Activated naive CD4-positive, alpha-beta T cell treated with anti-CD3 and anti-CD28 coated beads for 36 hours (primary cell): ENCODE measurements at regions of chr15 and their contacts with region 1.

Region 1: DNA sequence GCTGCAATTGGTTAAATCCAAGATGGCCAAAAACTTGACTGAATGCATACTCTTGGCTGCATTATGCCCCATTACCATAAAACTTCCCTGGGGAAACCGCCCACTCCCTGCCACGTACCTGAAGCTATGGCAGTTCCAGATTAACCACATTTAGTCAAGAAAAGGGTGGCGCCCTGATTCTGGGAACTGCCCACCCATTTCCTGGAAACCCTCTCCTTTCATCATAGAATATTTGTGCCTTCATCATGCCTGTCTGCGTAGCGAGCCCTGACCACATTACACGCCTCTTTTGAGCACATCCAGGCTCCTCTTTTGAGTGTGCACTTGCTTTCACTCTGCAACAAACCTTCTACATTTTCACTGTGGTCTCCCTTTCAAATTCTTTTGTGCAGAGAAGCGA is 5.2 kb downstream of the LINS1 start:
- DNase-seq: peak; percentile 99
- H3K4me3 Mint-ChIP-seq: peak overlapping the region; percentile 70
- H3K27ac Mint-ChIP-seq: no peak overlapping the region
- H3K4me1 Mint-ChIP-seq: peaks cover 65% of the 10 kb centered on the region
- H3K27me3 Mint-ChIP-seq: no peaks in the 10 kb centered on the region

Region 2: GRCh38 chr15:99442252-99442897 is 1154.4 kb before region 1 on chr15:
- CTCF ChIA-PET with region 1: no interaction called
- intact Hi-C with region 1: loop called (anchors 10 kb)
- DNase-seq: no peak
- H3K4me3 Mint-ChIP-seq: no peak overlapping the region
- H3K27ac Mint-ChIP-seq: no peak overlapping the region
- H3K4me1 Mint-ChIP-seq: peaks cover 57% of the 10 kb centered on the region
- H3K27me3 Mint-ChIP-seq: no peaks in the 10 kb centered on the region

Region 3: GRCh38 chr15:100529556-100529955 is 67.2 kb before region 1 on chr15:
- CTCF ChIA-PET with region 1: no interaction called
- intact Hi-C with region 1: no loop called
- DNase-seq: no peak
- H3K4me3 Mint-ChIP-seq: no peak overlapping the region
- H3K27ac Mint-ChIP-seq: no peak overlapping the region
- H3K4me1 Mint-ChIP-seq: peaks cover 16% of the 10 kb centered on the region
- H3K27me3 Mint-ChIP-seq: no peaks in the 10 kb centered on the region

Region 4: DNA sequence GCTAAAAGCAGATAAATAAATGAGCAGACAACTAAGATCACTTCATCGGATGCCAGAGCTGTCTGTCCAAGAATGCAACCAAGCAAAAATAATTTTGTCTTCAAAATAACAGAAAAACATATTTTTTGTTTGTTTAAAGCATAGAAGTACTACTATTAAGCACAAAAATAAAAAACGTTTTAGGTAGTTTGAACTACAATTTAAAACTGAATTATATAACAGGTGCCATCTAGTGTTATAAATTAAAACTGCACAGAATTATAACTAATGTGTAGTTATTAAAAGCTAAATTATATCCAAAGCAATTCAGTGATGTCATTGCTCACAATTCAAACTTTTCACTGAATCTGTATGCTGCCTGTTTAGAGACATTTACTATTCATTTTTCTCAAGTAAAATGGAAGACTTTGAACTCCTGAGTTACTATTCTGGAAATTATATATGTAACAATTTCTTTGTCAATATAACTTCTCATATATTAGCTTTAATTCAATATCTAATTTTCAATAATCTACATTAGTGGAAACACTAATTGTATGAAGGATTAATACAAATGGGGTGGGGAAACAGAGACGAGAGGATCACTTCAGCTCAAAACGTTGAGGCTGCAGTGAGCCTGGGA is 24.3 kb before region 1 on chr15:
- CTCF ChIA-PET with region 1: interaction called, 6 read pairs
- intact Hi-C with region 1: loop called (anchors 1 kb)
- DNase-seq: no peak
- H3K4me3 Mint-ChIP-seq: no peak overlapping the region
- H3K27ac Mint-ChIP-seq: peak overlapping the region; percentile 84
- H3K4me1 Mint-ChIP-seq: peaks cover 57% of the 10 kb centered on the region
- H3K27me3 Mint-ChIP-seq: no peaks in the 10 kb centered on the region

Region 5: GRCh38 chr15:100703032-100703578 is 106.3 kb after region 1 on chr15:
- CTCF ChIA-PET with region 1: no interaction called
- intact Hi-C with region 1: loop called (anchors 1 kb)
- DNase-seq: peak; percentile 71
- H3K4me3 Mint-ChIP-seq: no peak overlapping the region
- H3K27ac Mint-ChIP-seq: peak overlapping the region; percentile 71
- H3K4me1 Mint-ChIP-seq: peaks cover 5% of the 10 kb centered on the region
- H3K27me3 Mint-ChIP-seq: peaks cover 17% of the 10 kb centered on the region

Region 6: DNA sequence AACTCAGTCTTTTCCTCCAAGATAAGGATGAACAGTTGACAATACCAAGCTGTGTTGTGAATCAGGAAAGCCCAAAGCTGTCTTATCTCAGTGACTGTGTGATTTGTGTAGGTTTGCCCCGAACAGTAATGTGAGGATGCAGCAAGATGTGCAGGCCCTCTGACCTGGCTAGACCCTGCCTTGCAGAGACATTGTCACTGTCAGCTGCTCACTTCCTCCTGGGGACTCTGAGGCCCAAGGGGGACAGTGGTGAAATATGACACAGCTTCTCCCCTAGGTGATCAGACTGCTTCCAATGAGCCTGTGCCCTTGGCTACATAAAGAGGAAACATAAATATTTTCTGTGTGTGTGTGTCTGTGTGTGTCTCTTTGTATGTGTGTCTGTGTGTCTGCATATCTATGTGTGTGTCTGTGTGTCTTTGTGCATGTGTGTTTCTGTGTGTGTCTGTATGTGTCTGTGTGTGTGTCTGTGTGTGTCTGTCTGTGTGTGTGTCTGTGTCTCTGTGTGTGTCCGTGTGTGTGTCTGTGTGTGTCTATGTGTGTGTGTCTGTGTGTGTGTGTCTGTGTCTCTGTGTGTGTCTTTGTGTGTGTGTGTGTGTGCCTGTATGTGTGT is 344.1 kb after region 1 on chr15:
- CTCF ChIA-PET with region 1: no interaction called
- intact Hi-C with region 1: no loop called
- DNase-seq: no peak
- H3K4me3 Mint-ChIP-seq: no peak overlapping the region
- H3K27ac Mint-ChIP-seq: no peak overlapping the region
- H3K4me1 Mint-ChIP-seq: no peaks in the 10 kb centered on the region
- H3K27me3 Mint-ChIP-seq: no peaks in the 10 kb centered on the region

Region 7: GRCh38 chr15:101198800-101199199 is 602.0 kb after region 1 on chr15:
- CTCF ChIA-PET with region 1: no interaction called
- intact Hi-C with region 1: loop called (anchors 1 kb)
- DNase-seq: no peak
- H3K4me3 Mint-ChIP-seq: peak overlapping the region; percentile 48
- H3K27ac Mint-ChIP-seq: peak overlapping the region; percentile 85
- H3K4me1 Mint-ChIP-seq: peaks cover 81% of the 10 kb centered on the region
- H3K27me3 Mint-ChIP-seq: no peaks in the 10 kb centered on the region

Region 8: DNA sequence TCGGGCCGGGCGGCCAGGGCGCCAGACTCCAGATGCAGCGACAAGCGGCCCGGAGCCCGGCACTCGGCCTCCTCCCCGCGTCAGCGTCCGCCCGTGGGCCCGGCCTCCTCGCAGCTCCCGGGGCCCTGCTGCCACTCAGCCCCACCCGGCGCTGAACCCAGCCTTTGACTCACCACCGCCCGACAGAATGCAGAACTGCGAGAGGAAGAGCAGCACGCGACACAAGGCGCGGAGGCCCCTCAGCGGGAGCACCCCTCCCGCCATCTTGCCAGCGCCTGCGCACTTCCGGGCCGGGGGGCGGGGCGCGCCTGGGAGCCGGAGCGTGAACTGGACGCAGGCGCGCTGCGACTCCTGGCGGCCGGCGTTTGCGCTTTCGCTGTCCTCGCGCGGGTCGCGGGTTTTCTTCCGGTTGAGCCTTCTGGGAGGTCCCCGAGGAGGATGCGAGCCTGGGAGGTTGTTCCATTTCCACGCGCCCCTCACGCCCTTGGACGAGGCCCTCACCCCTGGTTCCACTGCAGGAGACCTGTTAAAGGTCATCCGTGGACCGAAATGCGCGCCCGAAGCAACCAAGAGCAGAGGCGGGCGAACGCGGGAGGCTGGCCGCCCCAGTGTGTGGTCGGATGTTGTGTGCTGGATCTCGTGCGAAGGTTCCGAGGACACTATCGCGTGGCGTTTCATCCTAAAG is 1055.4 kb after region 1 on chr15 and contains the start of gene TM2D3:
- CTCF ChIA-PET with region 1: no interaction called
- intact Hi-C with region 1: loop called (anchors 5 kb)
- DNase-seq: peak; percentile 95
- H3K4me3 Mint-ChIP-seq: peak within 1 kb of the TSS; percentile 89
- H3K27ac Mint-ChIP-seq: peak within 1 kb of the TSS; percentile 95
- H3K4me1 Mint-ChIP-seq: peaks cover 49% of the 10 kb centered on the region
- H3K27me3 Mint-ChIP-seq: no peaks in the 10 kb centered on the region
- total RNA-seq, gene TM2D3: 52.8 to 53.0 TPM